PC-3 (cell line): ENCODE measurements at regions of chr3 and their contacts with region 1.

Region 1: GRCh38 chr3:11774294-11774877 is 72.3 kb downstream of the TAMM41 start:
- DNase-seq: peak; percentile 74
- ATAC-seq: peak; percentile 50
- H3K4me3 ChIP-seq: no peak overlapping the region
- H3K27ac ChIP-seq: no peak overlapping the region
- H3K4me1 ChIP-seq: peaks cover 31% of the 10 kb centered on the region
- H3K27me3 ChIP-seq: no peaks in the 10 kb centered on the region
- CTCF ChIP-seq: peak; percentile 76

Region 2: DNA sequence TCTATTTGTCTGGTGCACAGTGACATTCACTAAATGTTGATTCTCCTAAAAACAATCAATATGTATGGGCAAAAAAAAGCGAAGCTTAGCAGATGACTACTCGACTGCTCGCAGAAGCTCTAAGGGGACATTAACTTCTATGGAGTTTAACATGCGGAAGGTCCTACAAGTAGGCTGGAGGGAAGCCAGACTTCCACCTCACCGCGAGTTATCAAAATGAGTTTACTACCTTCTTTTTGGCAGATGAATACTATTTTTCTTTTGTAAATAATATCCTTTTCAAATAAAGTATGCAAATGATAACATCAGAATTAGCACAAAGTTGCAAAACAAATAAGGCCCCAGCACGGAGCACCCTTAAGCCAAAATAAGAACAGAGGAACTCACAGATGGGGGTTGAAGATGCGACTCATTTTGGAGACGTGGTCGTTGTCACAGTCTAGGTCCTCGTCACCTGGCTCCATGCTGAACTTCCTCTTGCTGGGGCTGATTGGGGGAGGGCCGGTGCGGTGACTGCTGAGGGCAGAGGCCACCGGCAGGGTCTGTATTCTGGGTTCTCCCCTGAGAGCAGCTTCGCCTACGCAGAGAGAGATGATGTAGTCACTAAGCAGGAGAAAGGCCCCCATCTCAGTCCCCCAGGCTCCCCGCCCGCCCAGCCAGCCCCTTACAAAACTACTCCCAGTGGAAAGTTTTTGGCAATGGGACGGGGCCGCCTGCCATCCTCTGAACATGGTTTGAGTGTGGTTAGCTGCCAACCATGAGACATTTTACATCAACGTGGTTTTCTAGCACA is 172.7 kb before region 1 on chr3:
- CTCF ChIA-PET with region 1: interaction called, 11 read pairs
- POLR2A ChIA-PET with region 1: no interaction called
- intact Hi-C with region 1: no loop called
- DNase-seq: peak; percentile 51
- ATAC-seq: peak; percentile 1; the same call in 1 of the 2 replicates
- H3K4me3 ChIP-seq: 0 out of 2 replicates have a peak overlapping the region, but pooled peaks have one; percentile 10
- H3K27ac ChIP-seq: peak overlapping the region; percentile 88
- H3K4me1 ChIP-seq: peaks cover 42% of the 10 kb centered on the region
- H3K27me3 ChIP-seq: no peaks in the 10 kb centered on the region
- CTCF ChIP-seq: no peak

Region 3: GRCh38 chr3:11803977-11804892 is 29.8 kb after region 1 on chr3:
- CTCF ChIA-PET with region 1: no interaction called
- POLR2A ChIA-PET with region 1: no interaction called
- intact Hi-C with region 1: loop called (anchors 1 kb)
- DNase-seq: peak; percentile 67
- ATAC-seq: peak; percentile 82
- H3K4me3 ChIP-seq: no peak overlapping the region
- H3K27ac ChIP-seq: no peak overlapping the region
- H3K4me1 ChIP-seq: no peaks in the 10 kb centered on the region; the same call in 1 of the 2 replicates
- H3K27me3 ChIP-seq: no peaks in the 10 kb centered on the region
- CTCF ChIP-seq: peak; percentile 87

Region 4: GRCh38 chr3:11835028-11835639 is 60.7 kb after region 1 on chr3:
- CTCF ChIA-PET with region 1: interaction called, 4 read pairs
- POLR2A ChIA-PET with region 1: no interaction called
- intact Hi-C with region 1: loop called (anchors 1 kb)
- DNase-seq: peak; percentile 66
- ATAC-seq: 0 out of 2 replicates have a peak, but pooled peaks have one; percentile 58
- H3K4me3 ChIP-seq: no peak overlapping the region
- H3K27ac ChIP-seq: no peak overlapping the region
- H3K4me1 ChIP-seq: no peaks in the 10 kb centered on the region
- H3K27me3 ChIP-seq: no peaks in the 10 kb centered on the region
- CTCF ChIP-seq: peak; percentile 80